ENCODE measurements at regions of chr1 and their contacts with region 1.

Region 1: DNA sequence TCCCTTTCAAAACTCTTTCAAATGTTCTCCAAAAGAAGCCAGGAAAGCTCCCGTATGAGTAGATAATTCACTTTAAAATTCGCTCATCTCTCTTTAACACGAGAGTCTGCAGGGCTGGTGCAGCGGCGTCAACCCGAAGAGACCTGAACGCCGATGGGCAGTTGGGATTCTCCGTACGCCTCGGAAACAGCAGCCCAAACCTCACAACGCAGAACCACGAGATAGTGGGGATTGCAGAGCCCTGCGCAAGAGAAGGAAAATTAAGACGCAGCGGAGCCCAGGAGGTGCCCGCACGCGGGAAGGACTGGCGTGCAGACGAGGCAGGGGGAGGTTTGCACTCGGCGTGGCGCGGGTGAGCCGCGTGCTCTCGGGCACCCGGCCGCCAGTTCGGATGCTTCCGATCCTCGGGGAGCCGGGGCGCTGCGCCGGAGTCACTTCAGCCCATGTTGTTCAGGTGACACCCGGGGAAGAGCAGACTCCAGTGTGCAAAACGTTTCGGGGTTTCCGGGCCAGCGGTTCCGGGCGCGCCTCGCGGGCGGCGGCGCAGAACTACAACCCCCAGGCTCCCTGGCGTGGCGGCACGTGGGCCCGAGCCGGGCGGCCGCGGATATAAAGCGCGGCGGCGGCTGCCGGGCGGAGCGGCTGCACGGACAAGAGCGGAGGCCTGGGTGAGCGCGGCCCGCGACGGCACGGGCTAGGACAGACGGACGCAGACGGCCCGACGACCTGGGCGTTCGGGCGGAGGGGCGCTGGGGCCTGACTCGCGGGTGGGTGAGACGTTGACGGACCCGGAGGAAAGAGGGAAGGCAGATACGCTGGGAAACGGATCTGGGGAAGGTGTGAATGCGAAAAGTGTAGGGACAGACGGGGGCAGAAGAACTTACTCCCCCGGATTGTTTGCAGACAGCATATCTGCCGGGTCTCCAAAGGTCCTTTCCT is at the start of gene NPL:
- DNase-seq: peak; percentile 78
- ATAC-seq: peak; percentile 94
- H3K4me3 Mint-ChIP-seq: peak within 1 kb of the TSS; percentile 93
- H3K27ac Mint-ChIP-seq: peak within 1 kb of the TSS; percentile 80
- H3K4me1 Mint-ChIP-seq: peaks cover 17% of the 10 kb centered on the region
- H3K27me3 Mint-ChIP-seq: peaks cover 3% of the 10 kb centered on the region
- CTCF ChIP-seq: no peak
- total RNA-seq, gene NPL: 1.9 and 2.9 TPM in 2 replicates

Region 2: GRCh38 chr1:182143154-182143657 is 646.2 kb before region 1 on chr1:
- CTCF ChIA-PET with region 1: interaction called, 3 read pairs
- POLR2A ChIA-PET with region 1: no interaction called
- intact Hi-C with region 1: loop called (anchors 5 kb)
- DNase-seq: peak; percentile 72
- ATAC-seq: peak; percentile 56
- H3K4me3 Mint-ChIP-seq: no peak overlapping the region
- H3K27ac Mint-ChIP-seq: no peak overlapping the region
- H3K4me1 Mint-ChIP-seq: no peaks in the 10 kb centered on the region
- H3K27me3 Mint-ChIP-seq: peaks cover 12% of the 10 kb centered on the region
- CTCF ChIP-seq: no peak

Region 3: DNA sequence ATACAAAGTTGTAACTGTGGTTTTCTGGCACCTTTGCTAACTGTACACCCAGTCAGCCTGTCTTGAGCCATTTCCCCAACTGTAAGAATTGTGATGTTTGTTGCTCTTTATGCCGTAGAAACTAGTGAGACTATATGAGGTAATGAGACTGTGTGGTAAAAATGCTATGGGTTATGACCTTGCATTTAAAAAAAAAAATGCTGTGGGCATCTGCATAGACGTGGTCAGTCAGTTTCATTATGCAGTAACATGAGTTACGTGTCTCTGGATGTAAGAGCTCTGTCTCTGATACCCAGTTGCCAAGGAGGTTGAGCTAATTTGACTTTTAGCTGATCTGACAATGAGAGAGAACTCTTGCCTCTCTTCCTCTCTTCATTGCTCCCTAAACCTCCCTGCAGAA is 316.0 kb after region 1 on chr1:
- CTCF ChIA-PET with region 1: no interaction called
- POLR2A ChIA-PET with region 1: no interaction called
- intact Hi-C with region 1: no loop called
- DNase-seq: no peak
- ATAC-seq: no peak
- H3K4me3 Mint-ChIP-seq: no peak overlapping the region
- H3K27ac Mint-ChIP-seq: no peak overlapping the region
- H3K4me1 Mint-ChIP-seq: peaks cover 15% of the 10 kb centered on the region
- H3K27me3 Mint-ChIP-seq: no peaks in the 10 kb centered on the region
- CTCF ChIP-seq: no peak

Region 4: GRCh38 chr1:183646776-183647175 is 857.4 kb after region 1 on chr1:
- CTCF ChIA-PET with region 1: no interaction called
- POLR2A ChIA-PET with region 1: no interaction called
- intact Hi-C with region 1: loop called (anchors 5 kb)
- DNase-seq: no peak
- ATAC-seq: no peak
- H3K4me3 Mint-ChIP-seq: no peak overlapping the region
- H3K27ac Mint-ChIP-seq: no peak overlapping the region
- H3K4me1 Mint-ChIP-seq: no peaks in the 10 kb centered on the region
- H3K27me3 Mint-ChIP-seq: peaks cover 16% of the 10 kb centered on the region
- CTCF ChIP-seq: no peak